Ascending aorta (tissue), 2 donors: ENCODE measurements at regions of chr14 and their contacts with region 1.

Region 1: DNA sequence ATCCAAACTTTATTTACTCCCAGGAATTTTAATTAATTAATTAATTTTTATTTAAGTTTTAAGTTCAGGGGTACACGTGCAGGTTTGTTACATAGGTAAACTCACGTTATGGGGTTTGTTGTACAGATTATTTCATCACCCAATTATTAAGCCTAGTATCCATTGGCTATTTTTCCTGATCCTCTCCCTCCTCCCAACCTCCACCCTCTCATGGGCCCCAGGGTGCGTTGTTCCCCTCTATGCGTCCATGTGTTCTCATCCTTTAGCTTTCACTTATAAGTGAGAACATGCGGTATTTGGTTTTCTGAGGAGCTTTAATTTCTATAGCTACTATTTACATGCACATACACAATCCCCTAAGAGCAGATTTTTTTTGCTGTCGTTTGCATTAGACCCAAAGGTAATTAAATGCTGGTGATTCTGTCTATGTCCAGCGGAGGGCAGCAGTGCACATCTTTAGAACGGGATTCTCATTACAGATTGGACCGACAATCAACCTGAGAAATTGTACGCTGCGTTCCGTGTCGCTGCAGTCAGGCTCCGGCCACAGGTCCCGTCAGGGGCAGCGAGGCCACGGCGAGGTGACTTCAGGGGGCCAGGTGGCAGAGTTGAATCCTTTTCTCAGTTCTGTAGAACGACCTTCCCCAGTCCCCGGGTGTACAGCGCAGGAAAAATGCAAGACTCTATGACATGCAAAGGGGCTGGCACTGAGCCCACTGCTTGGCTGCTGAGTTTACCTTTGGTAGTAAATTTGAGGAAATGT is 11.6 kb downstream of the TMEM30B start:
- DNase-seq: peak in 1 of 2 donors; percentile 92
- H3K4me3 ChIP-seq: peak overlapping the region; percentile 35 to 57
- H3K27ac ChIP-seq: no peak overlapping the region
- H3K4me1 ChIP-seq: no peaks in the 10 kb centered on the region
- H3K27me3 ChIP-seq: no peaks in the 10 kb centered on the region
- CTCF ChIP-seq: peak; percentile 69 to 79 (median 70)

Region 2: GRCh38 chr14:61761959-61762786 is 492.7 kb after region 1 on chr14 and contains the start of gene SNAPC1:
- intact Hi-C with region 1: loop called (anchors 10 kb)
- DNase-seq: peak; percentile 86 to 98
- H3K4me3 ChIP-seq: peak within 1 kb of the TSS; percentile 86 to 91
- H3K27ac ChIP-seq: peak within 1 kb of the TSS; percentile 79 to 82
- H3K4me1 ChIP-seq: peaks cover 0 to 16% of the 10 kb centered on the region in 2 donors
- H3K27me3 ChIP-seq: no peaks in the 10 kb centered on the region
- CTCF ChIP-seq: no peak
- total RNA-seq, gene SNAPC1: 2.7 TPM